ENCODE measurements at regions of chr3 and their contacts with region 1.

Region 1: DNA sequence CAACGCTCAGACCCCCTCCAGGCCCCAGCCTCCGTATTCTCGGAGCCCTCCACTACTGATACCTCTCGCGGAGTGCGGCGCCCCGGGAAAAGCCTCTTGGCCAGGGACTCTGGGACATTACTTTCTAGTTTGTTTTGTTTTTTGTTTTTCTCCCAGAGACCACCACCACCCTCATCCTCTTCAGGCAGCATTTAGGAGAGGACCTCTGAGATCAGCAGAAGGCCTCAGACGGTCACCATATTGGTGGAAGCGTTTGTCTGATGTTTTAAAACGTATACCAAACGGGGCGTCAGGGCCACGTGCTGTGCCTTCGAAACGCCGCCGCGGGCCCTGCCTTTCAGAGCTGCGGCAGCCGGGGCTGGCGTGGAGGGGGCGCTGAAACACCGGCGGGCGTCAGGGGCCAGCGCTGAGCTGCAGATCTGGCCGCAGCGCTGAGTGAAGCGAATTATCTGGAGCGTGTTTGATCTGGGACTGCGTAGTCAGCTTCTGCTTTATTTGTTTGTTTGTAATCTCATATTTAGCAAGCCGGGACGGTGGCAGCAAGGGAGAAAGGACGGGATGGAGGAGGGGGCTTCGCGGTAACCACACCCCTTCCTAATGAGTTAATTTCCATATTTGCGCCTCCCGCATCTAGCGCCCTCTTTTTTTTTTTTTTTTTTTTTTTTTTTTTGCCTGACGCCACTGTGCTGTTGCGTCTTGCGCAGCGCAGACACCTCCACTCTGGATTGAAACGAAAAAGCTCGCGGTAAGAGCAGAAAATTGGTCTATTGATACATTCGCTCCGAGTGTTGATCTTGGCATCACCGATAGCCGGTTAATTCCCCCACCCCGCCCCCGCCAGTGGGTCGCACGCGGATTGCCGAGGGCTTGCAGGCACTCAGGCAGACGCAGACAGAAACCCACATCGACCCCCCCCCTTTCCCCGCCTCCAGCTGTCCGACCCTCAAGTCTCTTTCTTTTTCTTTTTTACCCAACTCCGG is 14.9 kb downstream of the SOX2 start:
- DNase-seq: peak; percentile 55 to 79
- H3K4me3 ChIP-seq: peak overlapping the region; percentile 38
- H3K4me3 Mint-ChIP-seq: peak overlapping the region; percentile 84
- H3K27ac Mint-ChIP-seq: peak overlapping the region; percentile 67
- H3K4me1 ChIP-seq: peaks cover 10% of the 10 kb centered on the region
- H3K4me1 Mint-ChIP-seq: no peaks in the 10 kb centered on the region
- H3K27me3 ChIP-seq: no peaks in the 10 kb centered on the region
- H3K27me3 Mint-ChIP-seq: no peaks in the 10 kb centered on the region
- CTCF ChIP-seq: peak; percentile 34 to 65

Region 2: DNA sequence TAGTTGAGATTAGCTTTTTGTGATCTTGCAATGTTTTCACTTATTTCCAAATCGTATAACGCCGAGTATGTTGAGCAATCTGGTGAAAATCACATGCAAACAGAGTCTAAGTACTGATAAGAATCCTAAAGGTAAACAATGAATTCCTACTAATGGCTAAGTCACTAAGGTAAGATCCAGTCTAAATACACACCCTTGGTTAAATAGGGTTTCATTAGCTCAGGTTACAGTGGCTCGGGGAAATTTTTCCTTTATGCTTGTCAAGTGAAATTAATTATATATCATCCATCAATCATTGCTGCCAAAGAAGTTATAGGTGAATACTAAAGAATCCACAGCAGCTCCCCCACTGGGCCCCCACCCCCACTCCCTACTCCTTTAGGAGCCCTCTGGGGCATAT is 124.4 kb after region 1 on chr3:
- CTCF ChIA-PET with region 1: no interaction called
- POLR2A ChIA-PET with region 1: no interaction called
- intact Hi-C with region 1: loop called (anchors 2 kb)
- DNase-seq: peak; percentile 61 to 69
- H3K4me3 ChIP-seq: no peak overlapping the region
- H3K4me3 Mint-ChIP-seq: peak overlapping the region; percentile 35
- H3K27ac Mint-ChIP-seq: peak overlapping the region; percentile 87
- H3K4me1 ChIP-seq: peaks cover 26% of the 10 kb centered on the region
- H3K4me1 Mint-ChIP-seq: peaks cover 22% of the 10 kb centered on the region
- H3K27me3 ChIP-seq: no peaks in the 10 kb centered on the region
- H3K27me3 Mint-ChIP-seq: no peaks in the 10 kb centered on the region
- CTCF ChIP-seq: no peak

Region 3: DNA sequence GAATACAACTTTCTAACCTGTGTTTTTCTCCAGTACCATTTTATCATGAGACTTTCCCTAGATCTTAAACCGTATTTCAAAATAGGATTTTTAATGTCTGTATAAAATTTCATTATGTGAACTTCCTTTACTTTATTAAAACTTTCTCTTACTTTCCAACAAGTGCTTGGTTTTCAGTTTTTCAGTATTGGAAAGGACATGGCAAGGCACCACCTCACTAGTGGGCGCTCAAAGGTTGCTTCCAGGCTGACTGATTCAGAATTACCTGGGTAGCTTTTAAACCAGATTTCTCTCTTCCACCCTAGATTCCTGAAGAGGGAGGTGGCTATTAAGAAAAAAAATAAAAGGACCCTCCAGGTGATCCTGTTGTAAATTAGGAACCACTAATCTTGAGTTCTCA is 221.6 kb after region 1 on chr3:
- CTCF ChIA-PET with region 1: interaction called, 3 read pairs
- POLR2A ChIA-PET with region 1: no interaction called
- intact Hi-C with region 1: loop called (anchors 5 kb)
- DNase-seq: peak in 1 of 2 experiments; percentile 25
- H3K4me3 ChIP-seq: no peak overlapping the region
- H3K4me3 Mint-ChIP-seq: no peak overlapping the region
- H3K27ac Mint-ChIP-seq: no peak overlapping the region
- H3K4me1 ChIP-seq: peaks cover 8% of the 10 kb centered on the region
- H3K4me1 Mint-ChIP-seq: peaks cover 10% of the 10 kb centered on the region
- H3K27me3 ChIP-seq: no peaks in the 10 kb centered on the region
- H3K27me3 Mint-ChIP-seq: no peaks in the 10 kb centered on the region
- CTCF ChIP-seq: peak in 1 of 2 experiments; percentile 34

Measured in Caco-2 (cell line).